Calu3 (cell line): ENCODE measurements at regions of chr2 and their contacts with region 1.

Region 1: DNA sequence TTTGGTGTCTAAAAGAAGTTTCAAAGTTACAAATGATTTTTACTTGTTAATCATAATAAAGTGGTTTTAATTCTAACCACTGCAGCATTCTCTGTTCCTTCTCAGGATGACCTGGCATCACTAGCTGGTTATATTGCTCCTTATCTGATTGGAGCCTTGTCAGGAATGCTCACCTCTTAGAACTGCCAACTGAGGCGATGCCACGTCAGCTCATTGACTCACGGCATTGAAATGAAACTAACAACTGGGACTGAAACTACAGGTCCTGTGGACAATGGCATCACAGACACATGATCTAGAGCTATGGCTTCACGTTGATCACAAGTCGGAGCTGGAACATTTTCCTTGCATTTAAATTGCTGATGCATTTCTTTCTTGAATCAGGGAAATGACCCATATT is 54.9 kb upstream of the MAP2 start:
- DNase-seq: peak; percentile 83
- H3K4me3 Mint-ChIP-seq: peak overlapping the region; percentile 31
- H3K27ac Mint-ChIP-seq: peak overlapping the region; percentile 77
- H3K4me1 Mint-ChIP-seq: peaks cover 31% of the 10 kb centered on the region
- H3K27me3 Mint-ChIP-seq: no peaks in the 10 kb centered on the region
- CTCF ChIP-seq: no peak

Region 2: DNA sequence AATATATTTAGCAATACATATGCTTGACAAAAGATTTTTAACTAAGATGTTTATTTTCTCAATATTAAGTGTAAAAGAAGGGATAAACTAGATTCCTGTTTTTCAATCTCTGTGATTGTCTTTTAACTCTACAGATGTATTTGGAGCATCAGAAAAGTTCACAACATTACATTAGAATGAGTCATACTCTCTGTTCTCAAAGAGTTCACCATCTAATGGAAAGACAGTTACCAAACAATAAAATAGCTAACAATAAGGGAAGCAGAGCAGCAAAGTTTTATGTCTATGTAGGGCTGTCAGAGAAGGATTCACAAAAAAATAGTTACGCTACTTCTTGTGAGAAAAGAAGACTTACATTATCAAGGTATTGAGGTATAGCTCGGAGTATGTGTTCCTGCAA is 54.2 kb before region 1 on chr2:
- CTCF ChIA-PET with region 1: no interaction called
- intact Hi-C with region 1: no loop called
- DNase-seq: no peak
- H3K4me3 Mint-ChIP-seq: no peak overlapping the region
- H3K27ac Mint-ChIP-seq: no peak overlapping the region
- H3K4me1 Mint-ChIP-seq: no peaks in the 10 kb centered on the region
- H3K27me3 Mint-ChIP-seq: no peaks in the 10 kb centered on the region
- CTCF ChIP-seq: no peak

Region 3: DNA sequence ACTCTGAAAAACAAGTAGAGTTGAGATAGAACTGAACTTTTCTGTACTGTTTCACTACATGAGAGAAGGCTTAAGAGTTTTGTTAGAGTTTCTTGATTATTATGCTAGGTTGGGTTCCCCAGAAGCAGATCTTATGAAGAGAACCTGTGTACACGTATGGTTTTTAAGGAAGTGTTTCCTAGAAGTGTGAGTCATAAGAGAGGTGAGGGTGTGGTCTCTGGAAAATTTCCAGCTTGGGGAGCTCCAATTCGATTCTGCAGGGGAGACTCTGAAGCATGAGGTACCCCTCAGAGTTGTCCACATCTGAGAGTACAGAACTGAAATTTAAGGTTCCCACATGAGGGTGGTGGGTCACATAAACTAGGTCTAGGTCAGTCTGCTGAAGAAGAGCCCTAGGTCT is 28.4 kb before region 1 on chr2:
- CTCF ChIA-PET with region 1: interaction called, 4 read pairs
- intact Hi-C with region 1: loop called (anchors 2 kb)
- DNase-seq: peak; percentile 57
- H3K4me3 Mint-ChIP-seq: peak overlapping the region; percentile 4
- H3K27ac Mint-ChIP-seq: peak overlapping the region; percentile 74
- H3K4me1 Mint-ChIP-seq: peaks cover 12% of the 10 kb centered on the region
- H3K27me3 Mint-ChIP-seq: no peaks in the 10 kb centered on the region
- CTCF ChIP-seq: no peak

Region 4: DNA sequence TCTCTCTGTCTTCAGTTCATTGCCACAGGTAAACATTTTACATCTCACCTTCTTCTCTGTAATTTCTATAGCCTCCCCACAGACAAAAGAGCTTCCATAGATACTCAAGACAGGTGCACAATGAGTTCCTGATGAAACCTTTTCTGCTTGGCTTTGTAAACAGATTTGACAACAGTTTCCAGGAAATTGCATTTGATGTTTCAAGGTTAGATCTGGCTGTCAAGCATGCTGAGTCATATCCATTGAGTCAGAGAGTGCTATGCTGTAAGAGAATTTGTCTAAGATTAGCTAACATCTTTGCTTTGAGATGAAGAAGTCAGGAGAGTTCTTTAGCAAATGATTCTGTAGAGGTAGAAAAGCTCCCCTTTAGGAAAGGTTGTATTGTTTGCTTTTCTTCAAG is 14.3 kb after region 1 on chr2:
- CTCF ChIA-PET with region 1: interaction called, 6 read pairs
- intact Hi-C with region 1: loop called (anchors 2 kb)
- DNase-seq: peak; percentile 14
- H3K4me3 Mint-ChIP-seq: no peak overlapping the region
- H3K27ac Mint-ChIP-seq: peak overlapping the region; percentile 94
- H3K4me1 Mint-ChIP-seq: peaks cover 24% of the 10 kb centered on the region
- H3K27me3 Mint-ChIP-seq: no peaks in the 10 kb centered on the region
- CTCF ChIP-seq: no peak

Region 5: DNA sequence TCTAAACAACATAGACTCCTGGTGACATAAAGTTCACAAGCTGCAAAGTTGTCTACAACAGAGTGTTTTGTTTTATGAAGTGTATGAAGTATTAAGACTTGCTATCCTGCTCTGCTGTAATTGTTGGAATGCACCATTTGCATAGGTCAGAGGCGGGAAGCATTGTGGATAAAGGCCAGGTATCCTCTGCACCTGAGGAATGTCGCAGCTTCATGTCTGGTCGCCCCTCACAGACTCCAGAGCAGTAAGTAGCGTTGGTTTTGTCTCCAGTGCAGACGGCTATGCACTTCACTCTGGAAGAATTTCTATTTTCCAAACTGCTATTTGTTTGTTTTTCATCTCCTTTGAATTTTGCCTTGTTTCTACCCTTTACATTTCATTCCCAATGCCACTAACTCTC is 465.9 kb after region 1 on chr2:
- CTCF ChIA-PET with region 1: no interaction called
- intact Hi-C with region 1: no loop called
- DNase-seq: no peak
- H3K4me3 Mint-ChIP-seq: no peak overlapping the region
- H3K27ac Mint-ChIP-seq: no peak overlapping the region
- H3K4me1 Mint-ChIP-seq: peaks cover 15% of the 10 kb centered on the region
- H3K27me3 Mint-ChIP-seq: no peaks in the 10 kb centered on the region
- CTCF ChIP-seq: no peak